ENCODE measurements at regions of chr9 and their contacts with region 1.

Region 1: GRCh38 chr9:13427587-13427986 is 148.1 kb upstream of the MPDZ start:
- DNase-seq: no peak
- H3K4me3 Mint-ChIP-seq: no peak overlapping the region
- H3K27ac Mint-ChIP-seq: no peak overlapping the region
- H3K4me1 Mint-ChIP-seq: no peaks in the 10 kb centered on the region
- H3K27me3 Mint-ChIP-seq: no peaks in the 10 kb centered on the region
- CTCF ChIP-seq: peak; percentile 38

Region 2: GRCh38 chr9:13213337-13213736 is 214.2 kb before region 1 on chr9:
- CTCF ChIA-PET with region 1: no interaction called
- intact Hi-C with region 1: loop called (anchors 10 kb)
- DNase-seq: no peak
- H3K4me3 Mint-ChIP-seq: no peak overlapping the region
- H3K27ac Mint-ChIP-seq: no peak overlapping the region
- H3K4me1 Mint-ChIP-seq: no peaks in the 10 kb centered on the region
- H3K27me3 Mint-ChIP-seq: no peaks in the 10 kb centered on the region
- CTCF ChIP-seq: no peak

Region 3: DNA sequence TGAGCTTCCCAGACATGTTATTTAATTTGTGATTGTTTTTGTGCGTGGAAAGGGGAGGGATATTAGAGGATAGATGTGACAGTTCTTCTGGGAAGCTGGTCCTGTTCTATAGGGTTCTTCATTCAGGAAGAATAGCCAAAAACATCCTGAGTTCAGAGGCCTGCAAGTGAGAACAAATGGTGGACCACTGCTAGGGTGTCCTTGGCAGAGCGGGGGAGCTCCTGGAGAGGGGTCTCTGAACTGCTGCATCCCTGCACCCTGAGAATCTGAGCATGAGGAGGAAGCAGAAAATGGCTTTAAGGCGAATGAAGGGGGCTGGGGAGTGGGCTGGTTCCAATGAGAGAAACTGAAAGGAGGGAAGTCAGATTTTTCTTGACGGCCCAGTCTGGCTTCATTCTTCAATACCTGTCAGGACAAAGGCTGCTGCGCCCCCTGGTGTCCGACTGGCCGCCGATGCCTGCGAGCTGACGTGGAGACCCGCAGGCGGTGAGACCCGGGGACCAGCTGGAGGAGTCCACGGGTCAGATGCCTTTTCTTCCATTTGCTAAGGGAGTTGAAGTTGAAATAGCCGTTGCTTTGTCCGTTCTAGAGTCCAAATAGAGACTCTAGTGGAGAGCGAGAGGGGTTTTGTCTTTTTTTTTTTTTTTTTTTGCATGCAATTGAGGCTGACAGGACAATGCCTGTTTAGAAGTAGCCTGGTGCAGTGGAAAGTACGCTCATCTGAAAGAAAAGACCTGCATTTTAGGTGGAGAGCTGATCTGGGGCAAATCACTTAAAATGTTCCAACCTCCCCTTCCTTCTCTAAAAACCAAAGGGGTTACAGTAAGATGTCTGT is 925.9 kb after region 1 on chr9:
- CTCF ChIA-PET with region 1: interaction called, 12 read pairs
- intact Hi-C with region 1: loop called (anchors 1 kb)
- DNase-seq: peak; percentile 90
- H3K4me3 Mint-ChIP-seq: peak overlapping the region; percentile 52
- H3K27ac Mint-ChIP-seq: no peak overlapping the region
- H3K4me1 Mint-ChIP-seq: peaks cover 13% of the 10 kb centered on the region
- H3K27me3 Mint-ChIP-seq: no peaks in the 10 kb centered on the region
- CTCF ChIP-seq: peak; percentile 50

Region 4: GRCh38 chr9:14400658-14400995 is 973.0 kb after region 1 on chr9:
- CTCF ChIA-PET with region 1: no interaction called
- intact Hi-C with region 1: loop called (anchors 2 kb)
- DNase-seq: peak; percentile 24
- H3K4me3 Mint-ChIP-seq: no peak overlapping the region
- H3K27ac Mint-ChIP-seq: no peak overlapping the region
- H3K4me1 Mint-ChIP-seq: no peaks in the 10 kb centered on the region
- H3K27me3 Mint-ChIP-seq: no peaks in the 10 kb centered on the region
- CTCF ChIP-seq: no peak

Region 5: DNA sequence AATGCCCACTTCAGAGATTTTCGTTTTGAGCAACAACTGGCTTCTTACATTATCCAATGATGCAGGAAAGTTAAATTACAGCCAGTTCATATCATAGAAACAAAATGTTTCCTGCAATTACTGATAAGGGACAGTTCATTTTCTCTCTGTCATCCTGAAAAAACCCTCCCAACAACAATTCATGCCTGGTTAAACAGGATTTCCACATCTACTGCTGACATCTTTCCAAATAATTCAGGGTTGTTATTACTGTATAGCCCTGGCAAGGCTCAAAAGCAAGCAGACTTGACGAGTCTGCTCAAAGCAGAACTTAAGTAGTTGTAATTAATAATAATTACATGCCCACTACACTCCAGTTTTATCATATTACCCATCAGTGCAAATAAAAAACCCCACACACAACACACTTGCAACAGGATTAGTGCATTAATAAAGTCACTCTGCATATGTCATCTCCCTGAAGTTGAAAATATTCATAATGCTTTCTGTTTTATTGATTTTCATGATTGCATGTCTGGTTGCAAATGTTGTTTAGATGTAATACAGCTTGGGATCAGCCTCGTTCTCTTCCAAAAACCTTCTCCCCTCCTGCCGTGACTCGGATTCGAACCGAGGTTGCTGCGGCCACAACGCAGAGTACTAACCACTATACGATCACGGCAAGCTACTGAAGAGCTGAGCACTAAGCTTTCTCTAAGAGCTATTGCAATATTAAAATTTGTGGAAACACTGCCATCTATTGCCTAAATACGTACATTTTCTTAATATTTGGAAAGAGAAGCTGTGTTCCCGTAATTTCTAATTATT is 1006.0 kb after region 1 on chr9:
- CTCF ChIA-PET with region 1: no interaction called
- intact Hi-C with region 1: loop called (anchors 5 kb)
- DNase-seq: no peak
- H3K4me3 Mint-ChIP-seq: no peak overlapping the region
- H3K27ac Mint-ChIP-seq: no peak overlapping the region
- H3K4me1 Mint-ChIP-seq: peaks cover 43% of the 10 kb centered on the region
- H3K27me3 Mint-ChIP-seq: no peaks in the 10 kb centered on the region
- CTCF ChIP-seq: no peak